Left colon (tissue), 2 donors: ENCODE measurements at regions of chr15 and their contacts with region 1.

Region 1: DNA sequence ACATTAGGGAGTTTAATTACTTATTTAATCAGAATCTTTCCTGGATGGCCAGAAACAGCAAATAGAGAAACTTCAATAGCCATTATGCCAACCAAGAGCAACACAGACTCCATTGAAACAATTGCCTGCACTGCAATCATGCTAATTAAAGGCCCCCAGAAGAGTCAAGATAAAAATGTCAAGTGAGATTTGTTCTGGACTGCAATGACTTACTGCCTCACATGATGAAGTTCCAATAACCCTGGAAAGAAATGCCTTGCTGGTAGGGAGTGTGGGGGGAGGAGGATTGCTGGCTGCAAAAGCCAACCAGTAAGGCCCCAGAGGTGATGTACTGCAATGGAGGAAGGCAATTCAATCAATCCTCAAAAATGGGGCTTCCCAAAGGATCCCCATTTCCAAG is 257.9 kb downstream of the NTRK3 start:
- DNase-seq: no peak
- ATAC-seq: no peak

Region 2: DNA sequence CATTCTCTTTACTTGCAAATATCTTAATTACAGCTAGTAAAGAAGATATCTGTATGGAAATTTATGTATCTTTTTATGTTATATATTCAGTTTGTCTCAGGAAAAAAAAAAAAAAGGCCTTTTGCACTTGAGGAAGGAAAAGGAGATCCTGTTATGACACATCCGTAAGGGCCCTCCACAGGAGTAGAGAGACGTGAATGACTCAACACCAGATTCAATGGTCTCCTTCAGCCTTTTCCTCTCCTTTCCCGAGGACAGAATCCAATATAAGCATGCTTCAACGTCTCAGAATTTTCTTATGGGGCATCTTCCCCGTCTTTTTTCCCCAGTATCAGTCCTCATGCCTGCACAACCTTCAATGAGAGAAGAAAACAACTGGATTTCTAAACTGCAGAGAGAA is 82.4 kb before region 1 on chr15:
- intact Hi-C with region 1: loop called in 1 of 2 experiments (anchors 10 kb)
- DNase-seq: no peak
- ATAC-seq: no peak

Region 3: DNA sequence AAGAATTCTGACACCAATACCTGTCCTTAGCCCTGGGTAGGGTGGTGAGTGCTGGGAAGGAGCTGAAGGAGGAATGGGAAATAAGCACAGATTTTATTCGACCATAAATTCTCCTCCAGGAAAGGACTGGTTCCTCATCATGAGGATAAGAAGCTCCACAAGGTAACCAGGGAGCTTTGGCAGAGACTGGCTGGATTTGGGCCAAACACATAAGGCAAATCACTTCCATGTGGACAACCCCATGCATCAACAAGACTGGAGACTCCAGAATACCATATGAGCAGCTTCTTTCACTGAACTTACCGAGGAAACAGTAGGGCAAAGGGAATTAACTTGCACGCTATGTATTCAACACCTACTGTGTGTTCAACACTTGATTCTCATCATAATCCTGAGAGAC is 54.6 kb before region 1 on chr15:
- intact Hi-C with region 1: no loop called
- DNase-seq: no peak
- ATAC-seq: no peak